ENCODE measurements at regions of chr11 and their contacts with region 1.

Region 1: GRCh38 chr11:62169091-62169847 is 20.7 kb upstream of the SCGB1D1 start:
- DNase-seq: no peak
- ATAC-seq: no peak
- H3K4me3 Mint-ChIP-seq: no peak overlapping the region
- H3K27ac Mint-ChIP-seq: no peak overlapping the region
- H3K4me1 Mint-ChIP-seq: peaks cover 2% of the 10 kb centered on the region
- H3K27me3 Mint-ChIP-seq: peaks cover 41% of the 10 kb centered on the region
- CTCF ChIP-seq: no peak

Region 2: DNA sequence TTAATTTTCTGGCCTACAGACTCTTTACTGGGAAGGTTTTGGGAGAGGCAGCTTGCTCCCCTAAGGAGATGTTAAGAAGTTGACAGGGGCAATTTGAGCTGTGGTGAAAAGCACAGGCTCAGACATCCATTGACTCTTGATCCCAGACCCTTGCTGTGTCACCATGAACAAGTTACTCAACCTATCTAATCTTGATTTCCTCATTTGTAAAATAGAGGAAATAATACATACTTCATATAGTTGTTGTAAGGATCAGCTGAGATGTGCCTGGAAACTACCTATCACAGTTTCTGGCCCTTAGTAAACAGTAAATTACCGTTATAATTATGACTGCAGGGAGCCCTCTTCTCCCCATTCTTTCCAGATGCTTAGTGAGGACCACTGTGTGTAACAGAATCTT is 146.2 kb after region 1 on chr11:
- CTCF ChIA-PET with region 1: interaction called, 4 read pairs
- POLR2A ChIA-PET with region 1: no interaction called
- intact Hi-C with region 1: loop called (anchors 1 kb)
- DNase-seq: no peak
- ATAC-seq: no peak
- H3K4me3 Mint-ChIP-seq: no peak overlapping the region
- H3K27ac Mint-ChIP-seq: no peak overlapping the region
- H3K4me1 Mint-ChIP-seq: peaks cover 12% of the 10 kb centered on the region
- H3K27me3 Mint-ChIP-seq: peaks cover 39% of the 10 kb centered on the region
- CTCF ChIP-seq: no peak